MCF 10A (cell line): ENCODE measurements at regions of chr19 and their contacts with region 1.

Region 1: DNA sequence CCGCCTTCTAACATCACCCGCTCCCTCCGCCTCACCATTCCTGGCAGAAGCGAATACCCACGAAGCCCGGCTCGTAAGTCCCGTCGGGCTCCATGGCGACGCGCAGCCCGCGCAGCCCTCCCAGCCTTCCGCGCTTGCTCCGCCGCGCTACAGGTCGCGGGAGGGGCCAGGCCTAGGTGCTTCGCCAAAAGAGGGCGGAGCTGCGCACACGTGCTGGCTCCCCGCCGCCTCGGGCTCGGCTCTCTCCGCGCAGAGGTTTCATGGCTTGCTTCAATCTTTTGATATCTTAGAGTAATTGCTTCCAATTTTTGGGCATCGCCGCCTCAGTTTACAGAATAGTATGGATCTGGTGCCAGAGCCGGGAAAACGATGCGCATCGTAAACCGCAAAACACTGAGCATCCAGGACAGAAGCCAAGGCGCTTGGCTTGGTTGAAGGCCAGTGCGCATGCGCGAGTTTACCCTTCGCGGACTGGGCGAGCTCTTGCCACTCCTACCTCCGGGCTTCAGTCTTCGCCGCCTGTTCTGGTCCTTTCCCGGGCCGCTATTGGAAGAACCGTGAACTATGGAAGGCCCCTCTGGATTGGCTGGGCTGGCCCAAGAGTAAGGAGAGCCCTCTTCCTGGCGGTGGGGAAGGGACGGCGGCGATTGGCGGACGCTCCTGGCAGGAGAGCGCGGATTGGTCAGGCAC is at the start of gene POLR2I:
- DNase-seq: peak; percentile 100
- H3K4me3 Mint-ChIP-seq: peak within 1 kb of the TSS; percentile 91
- H3K27ac Mint-ChIP-seq: peak within 1 kb of the TSS; percentile 94
- H3K4me1 Mint-ChIP-seq: peaks cover 17% of the 10 kb centered on the region
- H3K27me3 Mint-ChIP-seq: no peaks in the 10 kb centered on the region
- CTCF ChIP-seq: no peak
- total RNA-seq, gene POLR2I: 112 and 126 TPM in 2 replicates

Region 2: GRCh38 chr19:35882114-35882832 is 232.6 kb before region 1 on chr19:
- CTCF ChIA-PET with region 1: interaction called, 3 read pairs
- POLR2A ChIA-PET with region 1: interaction called, 3 read pairs
- intact Hi-C with region 1: loop called (anchors 10 kb)
- DNase-seq: peak; percentile 81
- H3K4me3 Mint-ChIP-seq: no peak overlapping the region
- H3K27ac Mint-ChIP-seq: no peak overlapping the region
- H3K4me1 Mint-ChIP-seq: peaks cover 9% of the 10 kb centered on the region
- H3K27me3 Mint-ChIP-seq: peaks cover 11% of the 10 kb centered on the region
- CTCF ChIP-seq: peak; percentile 75

Region 3: GRCh38 chr19:36054119-36054732 is 60.7 kb before region 1 on chr19 and contains the start of gene THAP8:
- CTCF ChIA-PET with region 1: interaction called, 8 read pairs
- POLR2A ChIA-PET with region 1: interaction called, 23 read pairs
- intact Hi-C with region 1: no loop called
- DNase-seq: peak; percentile 99
- H3K4me3 Mint-ChIP-seq: peak within 1 kb of the TSS; percentile 86
- H3K27ac Mint-ChIP-seq: peak within 1 kb of the TSS; percentile 73
- H3K4me1 Mint-ChIP-seq: peaks cover 4% of the 10 kb centered on the region
- H3K27me3 Mint-ChIP-seq: no peaks in the 10 kb centered on the region
- CTCF ChIP-seq: peak; percentile 40
- total RNA-seq, gene THAP8: 4.0 and 4.7 TPM in 2 replicates

Region 4: DNA sequence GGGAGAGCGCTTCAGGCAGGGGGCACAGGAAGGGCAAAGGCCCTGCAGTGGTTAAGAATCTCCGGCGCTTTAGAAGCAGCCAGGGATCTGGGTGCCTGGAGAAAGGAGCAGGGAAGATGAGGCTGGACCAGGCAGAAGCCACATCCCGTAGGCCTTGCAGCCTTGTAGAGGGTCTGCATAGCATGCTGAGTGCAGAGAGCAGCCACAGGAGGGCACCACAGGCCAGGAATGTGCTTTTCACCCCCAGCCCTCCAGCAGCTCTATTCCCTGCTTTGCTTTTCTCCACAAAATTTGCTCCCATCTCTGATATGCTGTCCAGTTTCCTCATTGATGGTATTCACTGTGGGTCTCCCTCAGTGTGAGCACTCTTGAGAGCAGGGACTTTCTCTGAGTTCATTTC is 54.5 kb before region 1 on chr19:
- CTCF ChIA-PET with region 1: interaction called, 8 read pairs
- POLR2A ChIA-PET with region 1: interaction called, 7 read pairs
- intact Hi-C with region 1: loop called (anchors 1 kb)
- DNase-seq: peak; percentile 50
- H3K4me3 Mint-ChIP-seq: no peak overlapping the region
- H3K27ac Mint-ChIP-seq: no peak overlapping the region
- H3K4me1 Mint-ChIP-seq: peaks cover 4% of the 10 kb centered on the region
- H3K27me3 Mint-ChIP-seq: no peaks in the 10 kb centered on the region
- CTCF ChIP-seq: peak; percentile 65

Region 5: DNA sequence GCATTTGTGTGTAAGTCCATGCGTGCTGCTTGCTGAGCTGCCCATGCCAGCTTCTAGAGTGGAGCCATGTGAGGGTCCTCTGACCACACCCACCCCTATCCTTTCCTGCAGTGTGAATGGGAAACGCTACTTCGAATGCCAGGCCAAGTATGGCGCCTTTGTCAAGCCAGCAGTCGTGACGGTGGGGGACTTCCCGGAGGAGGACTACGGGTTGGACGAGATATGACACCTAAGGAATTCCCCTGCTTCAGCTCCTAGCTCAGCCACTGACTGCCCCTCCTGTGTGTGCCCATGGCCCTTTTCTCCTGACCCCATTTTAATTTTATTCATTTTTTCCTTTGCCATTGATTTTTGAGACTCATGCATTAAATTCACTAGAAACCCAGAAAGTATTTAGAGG is 10.6 kb after region 1 on chr19:
- CTCF ChIA-PET with region 1: interaction called, 27 read pairs
- POLR2A ChIA-PET with region 1: interaction called, 32 read pairs
- intact Hi-C with region 1: no loop called
- DNase-seq: no peak
- H3K4me3 Mint-ChIP-seq: no peak overlapping the region
- H3K27ac Mint-ChIP-seq: no peak overlapping the region
- H3K4me1 Mint-ChIP-seq: peaks cover 5% of the 10 kb centered on the region
- H3K27me3 Mint-ChIP-seq: no peaks in the 10 kb centered on the region
- CTCF ChIP-seq: no peak

Region 6: DNA sequence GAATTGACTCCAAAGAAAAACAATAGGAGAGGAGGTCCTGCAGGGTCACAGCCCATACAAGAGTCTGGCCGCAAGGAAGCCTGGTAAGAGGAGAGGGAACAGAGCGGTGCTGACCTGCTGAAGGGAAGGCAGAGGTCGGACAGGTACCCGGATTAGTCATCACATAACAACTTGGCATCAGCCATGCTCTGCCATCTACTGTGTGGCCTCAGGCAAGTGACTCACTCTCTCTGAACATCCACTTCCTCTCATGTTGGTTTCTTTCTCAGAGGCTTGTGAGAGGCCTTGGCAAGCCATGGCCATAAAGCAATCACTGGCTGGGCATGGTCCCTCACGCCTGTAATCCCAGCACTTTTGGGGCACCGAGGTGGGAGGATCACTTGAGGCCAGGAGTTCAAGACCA is 17.6 kb after region 1 on chr19:
- CTCF ChIA-PET with region 1: interaction called, 27 read pairs
- POLR2A ChIA-PET with region 1: interaction called, 32 read pairs
- intact Hi-C with region 1: loop called (anchors 2 kb)
- DNase-seq: peak; percentile 100
- H3K4me3 Mint-ChIP-seq: no peak overlapping the region
- H3K27ac Mint-ChIP-seq: peak overlapping the region; percentile 71
- H3K4me1 Mint-ChIP-seq: peaks cover 34% of the 10 kb centered on the region
- H3K27me3 Mint-ChIP-seq: no peaks in the 10 kb centered on the region
- CTCF ChIP-seq: no peak

Region 7: GRCh38 chr19:36139473-36140303 is 24.8 kb after region 1 on chr19 and contains the start of gene CAPNS1:
- CTCF ChIA-PET with region 1: interaction called, 3 read pairs
- POLR2A ChIA-PET with region 1: interaction called, 22 read pairs
- intact Hi-C with region 1: loop called (anchors 2 kb)
- DNase-seq: peak; percentile 97
- H3K4me3 Mint-ChIP-seq: peak within 1 kb of the TSS; percentile 97
- H3K27ac Mint-ChIP-seq: peak within 1 kb of the TSS; percentile 97
- H3K4me1 Mint-ChIP-seq: peaks cover 38% of the 10 kb centered on the region
- H3K27me3 Mint-ChIP-seq: no peaks in the 10 kb centered on the region
- CTCF ChIP-seq: no peak
- total RNA-seq, gene CAPNS1: 666 and 788 TPM in 2 replicates